ENCODE measurements at regions of chr2 and their contacts with region 1.

Region 1: GRCh38 chr2:177556153-177556552 is 163.6 kb downstream of the AGPS start:
- DNase-seq: no peak
- H3K4me3 ChIP-seq: no peak overlapping the region
- H3K27ac ChIP-seq: no peak overlapping the region
- H3K4me1 ChIP-seq: no peaks in the 10 kb centered on the region
- H3K27me3 ChIP-seq: no peaks in the 10 kb centered on the region
- CTCF ChIP-seq: no peak

Region 2: DNA sequence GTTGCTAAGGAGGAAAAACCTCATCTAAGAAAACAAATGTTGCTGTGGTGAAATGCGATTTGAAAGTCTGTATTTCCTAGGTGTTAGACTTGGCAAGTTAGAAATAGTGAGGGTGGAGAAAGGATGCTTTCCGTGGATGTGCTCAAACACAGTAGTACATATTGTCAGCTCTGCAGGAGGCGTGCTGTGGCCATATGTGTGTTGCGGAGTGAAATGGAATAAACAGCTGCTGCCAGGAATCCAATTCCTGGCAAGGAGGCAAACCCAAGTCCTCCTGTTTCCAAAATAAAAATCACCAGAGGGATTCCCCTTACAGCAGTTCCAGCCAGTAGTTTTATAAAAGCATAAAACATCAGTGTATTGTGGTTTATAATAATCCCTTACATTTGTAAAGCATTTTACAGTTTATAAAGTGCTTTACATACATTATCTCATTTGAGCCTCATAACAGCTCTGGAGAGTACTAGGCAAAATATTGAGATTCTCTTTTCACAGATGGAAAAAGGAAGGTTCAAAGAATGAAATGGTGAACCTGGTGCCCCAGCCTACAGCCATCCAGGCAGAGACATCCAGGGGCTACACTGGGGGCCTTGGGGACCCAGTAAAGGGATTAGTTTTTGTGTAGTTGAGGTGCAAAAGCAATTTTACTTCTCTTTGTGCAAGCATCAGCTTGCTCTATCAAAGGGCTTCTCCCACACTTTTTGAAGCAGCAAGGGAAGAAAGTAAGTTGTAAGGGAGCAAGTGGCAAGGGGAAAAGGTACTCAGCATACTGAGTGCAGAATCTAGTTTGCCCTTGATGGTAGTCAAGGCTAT is 42.4 kb after region 1 on chr2:
- intact Hi-C with region 1: loop called (anchors 5 kb)
- DNase-seq: no peak
- H3K4me3 ChIP-seq: no peak overlapping the region
- H3K27ac ChIP-seq: no peak overlapping the region
- H3K4me1 ChIP-seq: no peaks in the 10 kb centered on the region
- H3K27me3 ChIP-seq: no peaks in the 10 kb centered on the region
- CTCF ChIP-seq: no peak

Region 3: DNA sequence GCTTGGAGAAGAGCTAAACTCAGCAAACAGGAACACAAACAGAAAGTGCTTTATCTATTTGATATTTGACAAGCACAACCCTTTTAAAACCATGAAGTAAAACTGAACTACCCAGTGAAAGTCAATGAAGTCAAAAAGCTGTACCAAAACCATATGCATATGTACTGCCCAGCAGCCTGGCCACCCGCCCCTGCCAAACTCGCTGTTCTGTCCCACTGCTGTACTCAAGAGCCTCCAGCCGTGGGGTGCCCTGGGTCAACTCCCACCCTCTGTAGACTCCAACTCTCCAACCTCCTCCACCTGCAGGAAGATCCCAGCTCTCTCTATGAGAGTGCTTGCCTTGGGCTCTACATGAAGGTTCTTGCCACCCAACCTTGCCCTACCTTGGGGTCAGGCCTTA is 104.6 kb after region 1 on chr2:
- intact Hi-C with region 1: no loop called
- DNase-seq: no peak
- H3K4me3 ChIP-seq: no peak overlapping the region
- H3K27ac ChIP-seq: no peak overlapping the region
- H3K4me1 ChIP-seq: no peaks in the 10 kb centered on the region
- H3K27me3 ChIP-seq: no peaks in the 10 kb centered on the region
- CTCF ChIP-seq: no peak

Region 4: DNA sequence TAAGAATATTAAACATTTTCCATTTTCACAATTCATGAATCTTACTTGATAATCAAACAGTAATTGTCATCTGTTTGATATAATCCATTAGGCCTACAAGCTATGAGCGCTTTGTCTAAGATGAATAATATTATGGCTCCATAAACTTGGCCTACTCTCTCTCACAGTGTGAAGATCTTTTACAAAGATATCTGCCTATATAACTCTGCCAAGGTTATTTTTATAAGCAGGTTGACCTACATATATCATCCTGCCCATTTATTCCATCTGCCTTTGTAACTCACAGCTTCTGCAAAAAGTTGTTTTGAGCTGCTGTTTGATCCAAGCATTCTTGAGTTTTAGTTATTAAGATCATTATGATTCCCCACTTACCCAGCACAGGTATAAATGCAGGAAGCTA is 358.1 kb after region 1 on chr2:
- intact Hi-C with region 1: no loop called
- DNase-seq: no peak
- H3K4me3 ChIP-seq: no peak overlapping the region
- H3K27ac ChIP-seq: no peak overlapping the region
- H3K4me1 ChIP-seq: no peaks in the 10 kb centered on the region
- H3K27me3 ChIP-seq: no peaks in the 10 kb centered on the region
- CTCF ChIP-seq: no peak